ENCODE measurements at regions of chr2 and their contacts with region 1.

Region 1: DNA sequence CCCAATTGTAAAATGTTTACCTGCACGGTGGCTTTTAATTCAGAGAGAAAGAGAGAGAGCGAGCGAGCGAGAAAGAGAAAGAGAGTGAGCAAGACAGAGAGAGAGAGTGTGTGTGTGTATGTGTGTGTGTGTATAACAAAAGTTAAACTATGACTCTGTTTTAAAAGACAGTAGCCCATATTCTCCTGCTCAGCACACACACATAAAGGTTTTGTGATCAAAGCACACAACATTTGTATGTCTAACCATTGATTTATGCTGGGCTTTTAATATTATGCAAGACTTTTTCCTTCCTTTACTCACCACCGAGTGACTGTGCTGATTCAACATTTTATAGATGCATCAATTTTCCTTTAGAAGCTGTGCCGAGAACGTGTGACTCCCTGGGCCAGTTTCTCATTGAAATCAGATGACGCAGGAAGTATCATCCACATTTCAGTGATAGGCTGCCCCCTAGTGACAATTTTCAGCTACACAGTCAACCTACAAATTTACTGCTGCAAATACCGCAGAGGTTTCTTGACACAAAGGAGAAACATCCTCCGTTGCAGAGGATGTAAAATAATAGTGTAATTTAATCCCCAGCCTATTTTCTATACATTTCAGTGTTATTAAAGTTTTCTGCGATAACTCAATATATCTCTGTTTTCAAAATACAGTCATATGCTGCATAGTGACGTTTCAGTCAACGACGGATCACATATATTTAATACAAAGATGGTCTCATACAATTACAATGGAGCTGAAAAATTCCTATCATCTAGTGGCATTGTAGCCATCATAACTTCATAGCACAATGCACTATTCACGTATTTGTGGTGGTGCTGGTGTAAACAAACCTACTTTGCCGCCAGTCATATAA is 165.9 kb upstream of the TANK start:
- DNase-seq: peak; percentile 66
- H3K27ac ChIP-seq: no peak overlapping the region
- CTCF ChIP-seq: peak; percentile 85

Region 2: DNA sequence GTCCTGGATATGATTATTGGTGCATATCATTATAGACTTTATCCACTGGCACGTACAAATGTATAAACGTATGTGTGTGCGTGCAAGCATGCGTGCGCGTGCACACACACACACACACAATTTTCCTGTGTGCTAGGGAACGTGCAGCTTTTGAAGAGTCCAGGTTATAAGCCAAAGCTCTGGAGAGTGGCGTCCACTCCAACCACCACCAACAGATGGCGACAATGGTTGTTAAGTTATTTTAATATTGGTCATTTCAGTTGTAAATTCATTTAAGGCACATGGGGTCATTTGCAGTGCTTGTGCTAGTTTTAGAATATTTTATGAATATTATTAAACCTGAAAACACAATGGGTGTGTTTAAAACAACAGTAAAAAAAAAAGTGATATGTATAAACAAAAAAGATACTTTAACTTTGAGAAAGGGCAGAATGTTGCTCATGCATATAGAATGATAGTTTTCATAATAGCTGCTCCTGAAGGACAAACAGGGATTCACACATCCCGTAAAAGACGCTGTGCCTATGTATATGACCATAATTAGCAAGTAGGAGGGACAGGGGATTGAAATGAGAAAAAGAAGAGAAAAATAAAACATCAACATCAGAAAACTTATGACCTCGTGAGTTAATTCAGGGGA is 670.1 kb before region 1 on chr2:
- CTCF ChIA-PET with region 1: interaction called, 23 read pairs
- POLR2A ChIA-PET with region 1: no interaction called
- DNase-seq: peak; percentile 44
- H3K27ac ChIP-seq: no peak overlapping the region
- CTCF ChIP-seq: peak; percentile 79

Region 3: DNA sequence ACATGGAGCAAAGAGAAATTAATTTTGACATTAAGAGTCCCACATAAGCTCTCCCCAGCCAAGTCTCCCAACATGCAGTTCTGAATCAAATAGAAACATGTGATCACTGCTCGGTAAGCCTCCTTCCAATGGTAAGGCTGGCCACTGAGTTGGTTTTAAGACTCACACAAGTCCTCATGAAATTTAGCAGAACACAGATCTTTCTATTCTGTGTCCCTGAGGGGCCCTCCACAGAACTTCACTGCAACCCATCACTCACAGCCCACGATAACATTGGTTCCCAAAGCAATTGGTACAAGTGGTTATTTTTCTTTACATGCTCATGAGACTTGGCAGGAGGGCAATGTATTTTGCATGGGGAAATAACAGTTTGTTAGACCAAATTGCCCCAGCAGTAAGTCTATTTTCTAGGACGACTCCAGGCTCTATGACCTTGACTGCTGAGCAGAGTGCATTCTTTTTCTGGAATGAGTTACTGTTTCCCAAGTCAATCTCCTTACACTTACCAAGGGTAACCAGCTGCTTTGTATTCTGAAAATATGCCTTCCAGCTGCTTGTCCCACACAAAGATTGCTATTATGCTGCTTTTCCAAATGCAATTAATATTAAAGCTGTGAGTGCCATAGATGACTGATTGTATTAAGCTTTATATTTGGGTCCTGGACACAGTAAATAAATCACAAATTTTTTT is 23.6 kb after region 1 on chr2:
- CTCF ChIA-PET with region 1: no interaction called
- POLR2A ChIA-PET with region 1: no interaction called
- DNase-seq: no peak
- H3K27ac ChIP-seq: no peak overlapping the region
- CTCF ChIP-seq: no peak

Measured in RWPE1 (cell line).